ENCODE measurements at regions of chrX and their contacts with region 1.

Region 1: DNA sequence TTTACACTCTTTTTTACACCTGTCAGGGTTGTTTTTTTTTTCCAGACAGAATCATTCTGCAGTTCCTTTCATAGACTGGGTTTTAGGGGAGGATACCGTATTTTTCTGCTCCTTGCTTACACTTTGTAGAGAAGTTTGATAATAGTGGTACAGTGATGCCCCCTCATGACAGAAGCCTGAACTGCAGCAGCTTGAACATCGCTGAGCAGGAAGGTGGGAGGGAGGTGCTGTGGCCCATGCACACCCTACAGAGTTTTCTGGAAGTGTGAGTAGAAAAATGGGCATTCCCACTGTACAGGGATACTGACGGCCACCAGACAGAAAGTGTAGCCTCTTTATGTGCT is 54.5 kb downstream of the RAB40A start:
- DNase-seq: peak; percentile 77
- H3K4me3 Mint-ChIP-seq: peak overlapping the region; percentile 70
- H3K27ac Mint-ChIP-seq: peak overlapping the region; percentile 38
- H3K4me1 Mint-ChIP-seq: peaks cover 5% of the 10 kb centered on the region
- H3K27me3 Mint-ChIP-seq: peaks cover 50% of the 10 kb centered on the region
- CTCF ChIP-seq: peak; percentile 76

Region 2: GRCh38 chrX:103211012-103211715 is 253.6 kb before region 1 on chrX:
- CTCF ChIA-PET with region 1: interaction called, 14 read pairs
- POLR2A ChIA-PET with region 1: interaction called, 3 read pairs
- intact Hi-C with region 1: loop called (anchors 1 kb)
- DNase-seq: peak; percentile 53
- H3K4me3 Mint-ChIP-seq: no peak overlapping the region
- H3K27ac Mint-ChIP-seq: no peak overlapping the region
- H3K4me1 Mint-ChIP-seq: no peaks in the 10 kb centered on the region
- H3K27me3 Mint-ChIP-seq: peaks cover 38% of the 10 kb centered on the region
- CTCF ChIP-seq: peak; percentile 39

Region 3: GRCh38 chrX:103343105-103343504 is 121.6 kb before region 1 on chrX:
- CTCF ChIA-PET with region 1: interaction called, 45 read pairs
- POLR2A ChIA-PET with region 1: interaction called, 9 read pairs
- intact Hi-C with region 1: loop called (anchors 1 kb)
- DNase-seq: peak; percentile 47
- H3K4me3 Mint-ChIP-seq: no peak overlapping the region
- H3K27ac Mint-ChIP-seq: peak overlapping the region; percentile 28
- H3K4me1 Mint-ChIP-seq: no peaks in the 10 kb centered on the region
- H3K27me3 Mint-ChIP-seq: peaks cover 63% of the 10 kb centered on the region
- CTCF ChIP-seq: peak; percentile 65

Region 4: GRCh38 chrX:103423955-103424638 is 40.6 kb before region 1 on chrX:
- CTCF ChIA-PET with region 1: no interaction called
- POLR2A ChIA-PET with region 1: no interaction called
- intact Hi-C with region 1: no loop called
- DNase-seq: no peak
- H3K4me3 Mint-ChIP-seq: no peak overlapping the region
- H3K27ac Mint-ChIP-seq: no peak overlapping the region
- H3K4me1 Mint-ChIP-seq: no peaks in the 10 kb centered on the region
- H3K27me3 Mint-ChIP-seq: peaks cover 43% of the 10 kb centered on the region
- CTCF ChIP-seq: no peak

Region 5: DNA sequence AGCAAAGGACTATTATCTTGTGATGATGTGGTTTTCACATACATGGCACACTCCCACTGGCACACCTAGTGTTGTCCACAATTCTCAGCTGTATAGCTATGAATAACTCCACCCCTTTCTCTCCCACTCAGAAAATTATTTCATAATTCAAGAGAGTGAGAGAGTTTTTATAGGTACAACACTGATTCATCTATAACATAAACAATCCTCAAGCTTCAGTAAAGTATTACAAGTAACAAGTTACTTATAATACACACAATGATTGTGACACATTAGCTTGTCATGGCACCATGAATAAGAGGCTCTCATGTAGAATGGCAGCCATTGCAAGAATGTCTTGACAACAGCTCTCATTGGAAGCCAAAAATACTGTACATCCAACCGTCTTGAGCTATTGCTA is 10.6 kb after region 1 on chrX:
- CTCF ChIA-PET with region 1: interaction called, 16 read pairs
- POLR2A ChIA-PET with region 1: interaction called, 4 read pairs
- intact Hi-C with region 1: no loop called
- DNase-seq: peak; percentile 59
- H3K4me3 Mint-ChIP-seq: no peak overlapping the region
- H3K27ac Mint-ChIP-seq: no peak overlapping the region
- H3K4me1 Mint-ChIP-seq: no peaks in the 10 kb centered on the region
- H3K27me3 Mint-ChIP-seq: peaks cover 25% of the 10 kb centered on the region
- CTCF ChIP-seq: no peak

Region 6: DNA sequence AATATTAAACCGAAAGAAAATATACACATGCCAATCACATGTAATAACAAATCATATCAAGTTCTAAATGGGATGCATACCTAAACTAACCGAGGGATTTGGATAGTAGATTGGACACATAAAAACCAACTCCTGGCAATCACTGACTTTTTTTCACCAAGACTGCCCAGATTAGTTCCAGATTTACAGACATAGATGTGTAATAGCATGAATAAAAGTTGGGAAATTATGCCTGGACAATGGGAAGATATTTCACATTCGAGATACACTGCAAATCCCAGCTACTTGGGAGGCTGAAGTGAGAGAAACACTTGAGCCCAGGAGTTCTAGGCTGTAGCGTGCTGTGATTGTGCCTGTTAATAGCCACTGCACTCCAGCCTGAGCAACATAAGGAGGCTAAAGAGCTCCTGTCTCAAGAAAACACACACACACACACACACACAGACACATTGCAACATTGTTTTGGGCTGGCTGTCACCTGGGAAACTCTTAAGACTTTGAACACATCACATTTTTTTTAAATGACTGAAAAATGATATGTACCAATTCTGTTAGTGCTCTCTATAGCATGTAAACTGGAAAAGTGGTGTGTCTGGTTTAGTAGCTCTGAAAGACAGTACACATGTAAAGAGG is 48.8 kb after region 1 on chrX:
- CTCF ChIA-PET with region 1: no interaction called
- POLR2A ChIA-PET with region 1: no interaction called
- intact Hi-C with region 1: no loop called
- DNase-seq: no peak
- H3K4me3 Mint-ChIP-seq: no peak overlapping the region
- H3K27ac Mint-ChIP-seq: no peak overlapping the region
- H3K4me1 Mint-ChIP-seq: peaks cover 11% of the 10 kb centered on the region
- H3K27me3 Mint-ChIP-seq: peaks cover 29% of the 10 kb centered on the region
- CTCF ChIP-seq: no peak

Measured in MCF 10A (cell line).